Activated CD4-positive, alpha-beta T cell treated with anti-CD3 and anti-CD28 coated beads, Interleukin-2, amount 10 ng/mL, durations not matched to agents 24 days and 14 days (primary cell): ENCODE measurements at regions of chr10 and their contacts with region 1.

Region 1: GRCh38 chr10:92208736-92209327 is 82.0 kb downstream of the CPEB3 start:
- DNase-seq: no peak
- H3K4me3 Mint-ChIP-seq: no peak overlapping the region
- H3K27ac Mint-ChIP-seq: no peak overlapping the region
- H3K4me1 Mint-ChIP-seq: peaks cover 15% of the 10 kb centered on the region
- H3K27me3 Mint-ChIP-seq: peaks cover 3% of the 10 kb centered on the region

Region 2: GRCh38 chr10:92103376-92104090 is 105.3 kb before region 1 on chr10:
- intact Hi-C with region 1: loop called (anchors 5 kb)
- DNase-seq: no peak
- H3K4me3 Mint-ChIP-seq: no peak overlapping the region
- H3K27ac Mint-ChIP-seq: no peak overlapping the region
- H3K4me1 Mint-ChIP-seq: peaks cover 14% of the 10 kb centered on the region
- H3K27me3 Mint-ChIP-seq: no peaks in the 10 kb centered on the region

Region 3: DNA sequence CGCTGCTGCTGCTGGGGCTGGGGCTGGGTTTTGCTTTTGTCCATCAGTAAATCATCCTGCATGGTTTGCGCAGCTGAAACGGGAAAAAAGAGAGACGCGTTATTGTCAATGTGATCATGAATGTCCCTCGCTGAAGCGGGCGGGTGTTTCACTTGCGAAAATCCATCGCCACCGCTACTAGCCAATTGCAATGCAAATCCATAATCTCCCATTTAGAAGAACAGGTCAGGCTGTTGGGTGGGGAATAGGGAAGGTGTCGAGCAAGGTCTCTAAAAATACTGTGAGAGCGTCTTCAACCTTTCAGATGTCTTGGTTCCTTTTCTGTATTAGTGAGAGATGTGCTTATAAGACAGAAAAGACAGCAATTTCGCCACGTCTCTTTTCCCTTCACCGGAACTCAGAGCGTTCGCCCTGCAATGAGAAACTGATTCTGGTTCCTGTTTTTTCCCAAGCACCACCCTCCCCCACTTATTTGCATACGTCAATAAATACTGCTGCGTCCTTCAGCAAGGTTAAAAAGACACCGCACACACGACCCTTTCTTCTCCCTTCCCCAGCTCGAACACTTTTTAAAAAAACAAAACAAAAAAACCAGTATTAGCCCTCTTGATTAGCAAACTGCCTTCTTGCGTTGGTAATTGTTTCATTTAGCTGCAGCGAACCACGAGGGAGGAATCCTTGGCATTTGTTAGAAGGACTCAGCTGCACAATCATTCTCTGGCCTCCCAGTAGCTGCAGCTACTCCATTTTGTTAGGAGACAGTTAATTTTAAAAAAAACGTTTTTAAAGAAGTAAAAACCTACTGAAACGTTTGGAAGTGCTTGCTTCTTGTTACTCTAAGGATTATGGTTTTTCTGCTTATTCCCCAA is 31.7 kb after region 1 on chr10:
- intact Hi-C with region 1: loop called (anchors 2 kb)
- DNase-seq: peak; percentile 84
- H3K4me3 Mint-ChIP-seq: peak overlapping the region; percentile 94
- H3K27ac Mint-ChIP-seq: peak overlapping the region; percentile 59
- H3K4me1 Mint-ChIP-seq: peaks cover 23% of the 10 kb centered on the region
- H3K27me3 Mint-ChIP-seq: peaks cover 21% of the 10 kb centered on the region